ENCODE measurements at regions of chr9 and their contacts with region 1.

Region 1: DNA sequence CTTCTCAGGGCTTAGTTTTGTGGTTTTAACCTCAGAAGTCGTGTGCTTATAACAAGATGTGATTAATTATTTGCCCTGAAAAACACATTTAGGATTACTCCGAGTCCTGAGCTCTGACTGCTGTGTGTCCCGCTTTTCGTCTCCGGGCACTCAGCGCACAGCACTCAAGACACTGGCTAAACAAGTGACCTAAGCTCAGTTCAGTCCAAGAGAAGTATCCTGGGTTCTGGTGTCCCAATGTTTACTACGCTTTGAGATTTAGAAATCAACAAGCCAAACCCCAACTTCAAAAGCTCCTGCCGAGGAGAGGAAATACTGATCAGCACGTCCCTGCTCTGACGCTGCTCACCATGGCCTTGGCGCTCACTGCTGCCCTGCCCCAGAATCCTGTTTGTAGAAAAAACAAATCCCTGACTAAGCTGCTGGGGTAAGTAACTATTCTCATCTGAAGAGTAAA is 53.2 kb downstream of the IPPK start:
- DNase-seq: no peak
- H3K4me3 ChIP-seq: no peak overlapping the region
- H3K4me1 ChIP-seq: no peaks in the 10 kb centered on the region
- H3K27me3 ChIP-seq: no peaks in the 10 kb centered on the region

Region 2: GRCh38 chr9:92010705-92011536 is 605.8 kb before region 1 on chr9:
- in situ Hi-C with region 1: no loop called
- DNase-seq: no peak
- H3K4me3 ChIP-seq: no peak overlapping the region
- H3K4me1 ChIP-seq: peaks cover 4% of the 10 kb centered on the region; the same call in 1 of the 2 replicates
- H3K27me3 ChIP-seq: no peaks in the 10 kb centered on the region

Region 3: GRCh38 chr9:92558612-92559374 is 57.9 kb before region 1 on chr9:
- in situ Hi-C with region 1: loop called (anchors 10 kb)
- DNase-seq: no peak
- H3K4me3 ChIP-seq: no peak overlapping the region
- H3K4me1 ChIP-seq: peaks cover 17% of the 10 kb centered on the region
- H3K27me3 ChIP-seq: no peaks in the 10 kb centered on the region

Region 4: DNA sequence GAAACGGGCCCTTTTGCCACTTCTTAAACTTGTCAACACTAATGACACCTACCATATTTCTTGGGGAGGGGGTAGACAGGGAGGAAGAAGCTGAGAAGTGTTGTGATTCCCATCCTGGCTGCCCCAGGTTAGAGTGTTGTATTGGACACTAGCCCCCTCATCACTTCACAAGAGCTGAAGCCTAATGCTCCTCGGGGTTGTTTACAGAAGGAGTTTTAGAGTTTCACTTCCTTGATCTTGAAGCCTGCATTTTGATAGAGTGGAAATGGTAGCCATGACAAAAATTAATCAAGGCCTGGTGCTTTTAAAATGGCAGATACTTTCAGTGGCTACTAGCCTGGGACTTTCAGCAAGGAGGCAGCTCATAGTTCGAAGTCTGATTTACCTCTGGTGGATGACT is 847.7 kb after region 1 on chr9:
- in situ Hi-C with region 1: no loop called
- DNase-seq: no peak
- H3K4me3 ChIP-seq: no peak overlapping the region
- H3K4me1 ChIP-seq: peaks cover 52% of the 10 kb centered on the region
- H3K27me3 ChIP-seq: no peaks in the 10 kb centered on the region